CD8-positive, alpha-beta T cell (primary cell): ENCODE measurements at regions of chr19 and their contacts with region 1.

Region 1: DNA sequence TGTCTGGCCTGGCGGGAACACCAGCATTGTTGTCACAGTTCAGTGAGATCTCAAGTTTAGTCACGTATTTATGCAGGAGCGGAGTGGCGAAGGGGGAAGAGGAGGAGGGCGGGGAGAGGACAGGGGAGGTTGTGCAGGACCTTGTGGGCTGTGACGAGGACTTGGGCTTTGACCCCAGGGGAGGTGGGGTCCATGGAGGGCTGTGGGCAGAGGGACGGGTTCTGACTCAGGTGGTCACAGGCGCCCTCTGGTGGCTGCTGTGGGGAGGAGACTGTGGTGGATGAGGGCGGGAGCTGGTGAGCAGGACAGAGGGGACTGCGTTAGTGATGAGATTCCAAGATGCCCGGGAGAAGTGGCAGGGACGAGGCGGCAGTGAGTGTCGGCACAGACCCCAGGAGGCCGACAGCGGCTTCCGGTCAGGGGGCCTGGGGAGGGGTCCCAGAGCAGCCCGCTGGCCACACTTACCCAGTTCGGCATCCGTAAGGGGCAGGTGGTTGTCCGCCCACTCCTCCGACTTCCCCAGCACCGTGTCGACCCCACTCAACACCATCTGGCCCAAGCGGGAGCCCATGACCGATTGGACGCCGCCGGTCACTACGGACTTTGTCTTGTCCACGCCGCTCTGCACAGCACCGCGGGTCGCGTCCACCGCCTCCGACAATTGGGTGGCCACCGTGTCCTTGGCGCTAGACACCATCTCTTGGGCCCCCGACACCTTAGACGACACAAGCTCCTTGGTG is 15.7 kb downstream of the PLIN3 start:
- DNase-seq: peak; percentile 58 to 88 (median 75)
- ATAC-seq: peak; percentile 91
- H3K4me3 ChIP-seq: no peak overlapping the region
- H3K4me3 Mint-ChIP-seq: no peak overlapping the region
- H3K27ac ChIP-seq: no peak overlapping the region
- H3K27ac Mint-ChIP-seq: no peak overlapping the region
- H3K4me1 ChIP-seq: no peaks in the 10 kb centered on the region
- H3K4me1 Mint-ChIP-seq: no peaks in the 10 kb centered on the region
- H3K27me3 ChIP-seq: no peaks in the 10 kb centered on the region
- H3K27me3 Mint-ChIP-seq: no peaks in the 10 kb centered on the region
- CTCF ChIP-seq: peak; percentile 73

Region 2: DNA sequence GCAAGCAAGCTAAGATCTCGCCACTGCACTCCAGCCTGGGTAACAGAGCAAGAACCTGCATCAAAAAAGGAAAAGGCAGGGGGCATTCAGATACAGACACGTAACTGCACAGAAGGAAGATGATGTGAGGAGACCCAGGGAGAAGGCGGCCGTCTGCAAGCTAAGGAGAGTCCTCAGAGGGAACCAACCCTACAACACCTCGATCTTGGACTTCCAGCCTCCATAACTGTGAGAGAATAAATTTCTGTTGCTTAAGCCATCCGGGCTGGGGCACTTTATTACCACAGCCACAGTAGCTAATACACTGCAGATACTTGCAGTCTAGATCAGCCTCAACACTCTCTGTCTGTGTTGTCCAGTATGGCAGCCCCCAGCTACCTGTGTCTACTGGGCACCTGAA is 28.1 kb before region 1 on chr19:
- CTCF ChIA-PET with region 1: interaction called, 33 read pairs
- POLR2A ChIA-PET with region 1: interaction called, 4 read pairs
- intact Hi-C with region 1: no loop called
- DNase-seq: no peak
- ATAC-seq: no peak
- H3K4me3 ChIP-seq: no peak overlapping the region
- H3K4me3 Mint-ChIP-seq: no peak overlapping the region
- H3K27ac ChIP-seq: no peak overlapping the region
- H3K27ac Mint-ChIP-seq: no peak overlapping the region
- H3K4me1 ChIP-seq: no peaks in the 10 kb centered on the region
- H3K4me1 Mint-ChIP-seq: peaks cover 6% of the 10 kb centered on the region
- H3K27me3 ChIP-seq: no peaks in the 10 kb centered on the region
- H3K27me3 Mint-ChIP-seq: no peaks in the 10 kb centered on the region
- CTCF ChIP-seq: no peak

Region 3: DNA sequence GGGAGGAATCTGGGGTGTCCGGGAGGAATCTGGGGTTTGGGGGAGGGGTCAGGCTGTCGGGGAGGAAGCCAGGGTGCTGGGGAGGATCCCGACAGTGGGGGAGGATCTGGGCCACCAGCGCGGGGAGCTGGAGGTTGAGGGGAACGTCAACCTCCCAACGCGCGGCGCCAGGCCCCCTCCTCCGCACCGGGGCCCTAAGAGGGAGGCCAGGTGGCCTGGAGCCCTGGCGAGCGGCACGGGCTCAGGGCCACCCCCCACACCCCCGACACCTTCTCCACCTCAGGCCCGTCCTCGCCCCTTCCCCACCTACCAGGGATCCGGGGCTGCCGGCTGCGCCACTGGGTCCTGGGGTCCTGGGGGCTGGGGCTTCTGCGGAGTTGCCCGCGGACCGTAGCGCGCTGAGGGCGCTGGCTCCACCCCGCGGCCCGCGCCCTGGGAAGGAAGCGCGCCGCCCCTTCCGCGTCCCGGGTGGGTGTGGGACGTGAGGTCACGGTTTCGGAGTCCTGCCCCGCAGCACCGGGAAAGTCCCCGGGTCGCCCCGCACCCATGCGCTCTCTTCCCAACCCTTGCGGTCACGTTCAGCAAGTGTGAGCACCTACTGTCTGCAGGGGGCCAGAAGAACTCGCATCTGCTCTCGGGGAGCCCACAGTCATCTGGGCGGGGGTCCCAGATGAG is 20.3 kb before region 1 on chr19 and contains the start of gene TICAM1:
- CTCF ChIA-PET with region 1: interaction called, 15 read pairs
- POLR2A ChIA-PET with region 1: no interaction called
- intact Hi-C with region 1: no loop called
- DNase-seq: peak; percentile 44 to 95 (median 74)
- ATAC-seq: peak; percentile 91
- H3K4me3 ChIP-seq: peak within 1 kb of the TSS; percentile 79 to 92
- H3K4me3 Mint-ChIP-seq: peak within 1 kb of the TSS; percentile 82
- H3K27ac ChIP-seq: peak within 1 kb of the TSS; percentile 68 to 91
- H3K27ac Mint-ChIP-seq: peak within 1 kb of the TSS; percentile 89
- H3K4me1 ChIP-seq: peaks cover 16% of the 10 kb centered on the region
- H3K4me1 Mint-ChIP-seq: peaks cover 25% of the 10 kb centered on the region
- H3K27me3 ChIP-seq: no peaks in the 10 kb centered on the region
- H3K27me3 Mint-ChIP-seq: no peaks in the 10 kb centered on the region
- CTCF ChIP-seq: no peak
- total RNA-seq, gene TICAM1: 8.8 to 9.4 TPM

Region 4: GRCh38 chr19:4867534-4868285 is 16.0 kb after region 1 on chr19 and contains the start of gene PLIN3:
- CTCF ChIA-PET with region 1: interaction called, 13 read pairs
- POLR2A ChIA-PET with region 1: interaction called, 8 read pairs
- intact Hi-C with region 1: no loop called
- DNase-seq: peak; percentile 74 to 91 (median 87)
- ATAC-seq: peak; percentile 94
- H3K4me3 ChIP-seq: peak within 1 kb of the TSS; percentile 72 to 78
- H3K4me3 Mint-ChIP-seq: peak within 1 kb of the TSS; percentile 78
- H3K27ac ChIP-seq: peak within 1 kb of the TSS; percentile 30 to 55
- H3K27ac Mint-ChIP-seq: peak within 1 kb of the TSS; percentile 49
- H3K4me1 ChIP-seq: peaks cover 17% of the 10 kb centered on the region
- H3K4me1 Mint-ChIP-seq: peaks cover 16% of the 10 kb centered on the region
- H3K27me3 ChIP-seq: no peaks in the 10 kb centered on the region
- H3K27me3 Mint-ChIP-seq: no peaks in the 10 kb centered on the region
- CTCF ChIP-seq: no peak
- total RNA-seq, gene PLIN3: 16.2 to 16.7 TPM

Region 5: GRCh38 chr19:4909897-4910593 is 58.3 kb after region 1 on chr19:
- CTCF ChIA-PET with region 1: interaction called, 20 read pairs
- POLR2A ChIA-PET with region 1: no interaction called
- intact Hi-C with region 1: no loop called
- DNase-seq: peak; percentile 85 to 96 (median 93)
- ATAC-seq: peak; percentile 82
- H3K4me3 ChIP-seq: peak overlapping the region; percentile 44 to 62
- H3K4me3 Mint-ChIP-seq: peak overlapping the region; percentile 99
- H3K27ac ChIP-seq: no peak overlapping the region
- H3K27ac Mint-ChIP-seq: no peak overlapping the region
- H3K4me1 ChIP-seq: peaks cover 57% of the 10 kb centered on the region
- H3K4me1 Mint-ChIP-seq: peaks cover 66% of the 10 kb centered on the region
- H3K27me3 ChIP-seq: no peaks in the 10 kb centered on the region
- H3K27me3 Mint-ChIP-seq: no peaks in the 10 kb centered on the region
- CTCF ChIP-seq: no peak